Activated CD8-positive, alpha-beta T cell treated with anti-CD3 and anti-CD28 coated beads for 36 hours (primary cell): ENCODE measurements at regions of chr2 and their contacts with region 1.

Region 1: DNA sequence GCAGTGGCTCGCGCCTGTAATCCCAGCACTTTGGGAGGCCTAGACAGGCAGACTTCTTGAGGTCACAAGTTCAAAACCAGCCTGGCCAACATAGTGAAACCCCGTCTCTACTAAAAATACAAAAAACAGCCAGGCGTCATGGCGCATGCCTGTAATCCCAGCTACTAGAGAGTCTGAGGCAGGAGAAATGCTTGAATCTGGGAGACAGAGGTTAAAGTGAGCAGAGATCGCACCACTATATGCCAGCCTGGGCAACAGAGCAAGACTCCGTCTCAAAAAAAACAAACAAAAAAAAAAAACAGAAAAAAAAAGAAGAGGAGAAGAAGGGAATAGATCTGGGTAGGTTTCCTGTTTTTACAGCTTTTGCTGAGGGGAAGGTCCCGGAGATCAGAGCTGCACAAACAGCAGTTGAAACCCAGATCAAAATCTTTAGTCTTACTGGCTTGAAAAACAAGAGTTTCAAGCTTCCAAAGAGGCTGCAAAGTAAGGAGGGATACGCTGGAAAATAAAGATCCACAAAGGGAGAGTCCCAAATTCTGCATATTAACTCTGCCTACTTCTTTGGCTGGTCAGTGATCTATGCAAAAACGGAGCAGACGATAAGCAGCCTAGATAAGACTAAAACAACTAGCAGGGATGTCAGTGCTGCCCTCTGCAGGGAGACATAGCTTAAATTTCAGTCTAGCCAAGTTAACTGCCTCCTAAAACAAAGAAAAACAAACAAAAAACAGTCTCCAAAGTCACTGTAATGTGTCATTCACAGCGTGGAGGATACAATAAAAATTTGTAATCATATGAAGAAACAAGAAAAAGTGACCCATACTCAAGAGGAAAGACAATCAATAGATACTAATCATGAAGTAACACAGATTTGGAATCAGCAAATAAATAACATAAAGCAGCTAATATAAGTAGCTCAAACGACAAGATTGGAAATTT is 74.1 kb downstream of the TLK1 start:
- DNase-seq: peak; percentile 73
- ATAC-seq: peak; percentile 73
- H3K4me3 Mint-ChIP-seq: peak overlapping the region; percentile 61
- H3K27ac Mint-ChIP-seq: peak overlapping the region; percentile 79
- H3K4me1 Mint-ChIP-seq: peaks cover 64% of the 10 kb centered on the region
- H3K27me3 Mint-ChIP-seq: no peaks in the 10 kb centered on the region
- CTCF ChIP-seq: peak; percentile 68

Region 2: DNA sequence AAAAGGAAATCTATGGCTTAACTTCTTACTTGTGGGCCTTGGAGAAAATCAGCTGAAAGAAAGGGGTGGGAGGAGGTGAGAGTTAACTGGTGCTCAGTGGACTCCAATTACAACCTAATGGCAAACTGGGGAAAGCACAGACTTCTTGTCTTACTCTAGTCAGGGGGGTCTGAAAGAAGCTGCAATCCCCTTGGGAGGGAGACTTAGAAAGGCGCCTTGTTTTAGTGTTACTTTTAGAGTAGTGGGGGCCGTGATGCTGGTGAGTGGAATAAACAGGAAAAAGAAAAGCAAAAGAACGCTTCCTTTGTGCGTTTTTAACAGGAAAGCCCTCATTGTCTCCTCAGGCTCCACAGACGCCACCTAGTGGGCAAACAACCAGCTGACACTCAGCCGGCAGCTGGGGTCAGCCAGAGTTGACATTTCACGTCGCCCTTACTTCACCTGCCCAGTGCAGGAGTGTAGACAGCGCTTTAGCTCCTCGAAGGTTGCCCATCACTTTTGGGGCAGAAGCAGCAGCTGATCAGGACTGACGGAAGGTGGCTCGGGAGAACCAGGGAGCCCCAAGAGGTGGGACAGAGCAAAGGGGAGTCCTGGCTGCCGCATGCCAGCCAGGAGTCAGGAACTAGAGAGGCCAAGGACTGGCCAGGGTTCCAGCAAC is 213.5 kb before region 1 on chr2:
- CTCF ChIA-PET with region 1: no interaction called
- POLR2A ChIA-PET with region 1: no interaction called
- intact Hi-C with region 1: no loop called
- DNase-seq: peak; percentile 86
- ATAC-seq: peak; percentile 98
- H3K4me3 Mint-ChIP-seq: peak overlapping the region; percentile 49
- H3K27ac Mint-ChIP-seq: peak overlapping the region; percentile 60
- H3K4me1 Mint-ChIP-seq: peaks cover 10% of the 10 kb centered on the region
- H3K27me3 Mint-ChIP-seq: peaks cover 3% of the 10 kb centered on the region
- CTCF ChIP-seq: peak; percentile 95

Region 3: DNA sequence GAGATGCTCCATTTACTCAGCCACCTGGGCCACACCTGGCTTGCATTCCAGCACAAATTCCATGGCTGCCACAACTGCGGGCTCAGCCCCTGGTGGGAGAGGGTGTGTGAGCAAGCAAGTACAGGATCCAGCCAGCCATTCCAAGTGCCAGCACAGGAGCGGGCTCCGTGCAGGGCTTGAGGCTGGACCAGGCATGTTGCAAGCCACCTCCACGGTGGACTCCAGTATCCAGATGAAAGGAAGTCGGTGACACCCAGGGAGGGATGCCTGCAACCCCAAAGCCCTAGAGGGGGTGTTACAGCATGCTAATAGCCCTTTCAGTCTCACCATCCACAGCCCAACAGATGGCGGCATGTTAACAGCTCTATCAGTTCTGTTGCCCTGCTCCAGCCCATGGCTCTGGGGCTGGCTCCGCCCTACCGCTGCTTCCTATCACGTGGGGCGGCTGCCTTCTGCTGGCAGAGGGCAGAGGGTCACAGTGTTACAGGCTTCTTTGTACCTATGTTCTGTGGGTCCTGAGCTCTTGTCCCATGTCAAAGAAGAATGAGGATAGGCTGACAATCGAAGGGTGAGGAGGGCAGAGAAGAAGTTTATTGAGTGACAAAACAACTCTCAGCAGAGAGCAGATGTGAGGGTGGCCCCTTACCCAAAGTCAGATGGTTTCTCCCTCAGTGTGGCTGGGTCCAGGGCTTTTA is 169.3 kb before region 1 on chr2:
- CTCF ChIA-PET with region 1: no interaction called
- POLR2A ChIA-PET with region 1: no interaction called
- intact Hi-C with region 1: no loop called
- DNase-seq: no peak
- ATAC-seq: no peak
- H3K4me3 Mint-ChIP-seq: no peak overlapping the region
- H3K27ac Mint-ChIP-seq: no peak overlapping the region
- H3K4me1 Mint-ChIP-seq: no peaks in the 10 kb centered on the region
- H3K27me3 Mint-ChIP-seq: no peaks in the 10 kb centered on the region
- CTCF ChIP-seq: no peak

Region 4: GRCh38 chr2:170928824-170929685 is 157.6 kb before region 1 on chr2 and contains the start of gene GORASP2:
- CTCF ChIA-PET with region 1: interaction called, 11 read pairs
- POLR2A ChIA-PET with region 1: interaction called, 3 read pairs
- intact Hi-C with region 1: no loop called
- DNase-seq: peak; percentile 100
- ATAC-seq: peak; percentile 93
- H3K4me3 Mint-ChIP-seq: peak within 1 kb of the TSS; percentile 99
- H3K27ac Mint-ChIP-seq: peak within 1 kb of the TSS; percentile 99
- H3K4me1 Mint-ChIP-seq: peaks cover 45% of the 10 kb centered on the region
- H3K27me3 Mint-ChIP-seq: no peaks in the 10 kb centered on the region
- CTCF ChIP-seq: peak; percentile 96
- total RNA-seq, gene GORASP2: 68.4 to 70.6 TPM

Region 5: DNA sequence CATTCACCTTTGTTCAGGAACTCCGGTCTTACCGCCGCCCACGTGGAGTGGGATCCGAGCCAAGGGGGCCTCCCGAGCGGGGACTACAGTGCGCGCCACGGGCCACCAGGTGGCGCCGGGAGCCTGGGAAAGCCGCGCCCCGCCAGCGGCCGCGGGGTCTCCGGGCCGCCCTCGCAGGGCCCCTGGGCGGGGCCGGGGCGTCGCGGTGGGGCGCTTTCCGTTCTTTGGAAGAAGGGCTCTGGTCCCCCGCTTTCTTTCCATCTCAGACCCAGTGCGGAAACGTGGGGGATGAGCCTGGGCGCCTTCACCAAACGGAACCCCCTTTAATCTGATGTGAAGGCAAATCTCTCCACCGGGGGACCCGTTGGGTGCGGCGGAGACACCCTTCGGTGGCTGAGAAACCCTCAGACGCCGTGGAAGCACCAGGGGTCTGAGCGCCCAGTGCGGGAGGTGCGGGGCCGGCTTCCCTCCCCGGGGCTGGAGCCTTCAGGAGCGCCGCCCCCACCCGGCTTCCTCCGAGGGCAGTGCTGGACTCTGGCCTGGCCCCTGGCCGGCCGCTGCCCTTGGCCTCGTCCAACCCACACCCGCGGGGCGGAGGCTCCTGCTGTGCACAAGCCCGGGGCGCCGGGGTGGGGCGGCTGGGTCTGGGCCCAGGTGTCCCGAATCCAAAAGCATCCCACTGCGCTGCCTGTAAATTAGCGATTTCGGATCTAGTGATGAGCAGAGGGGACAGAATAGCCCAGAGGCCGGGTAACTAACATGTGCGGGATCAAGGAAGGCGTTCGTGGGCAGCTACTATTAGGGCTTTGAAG is 112.9 kb before region 1 on chr2:
- CTCF ChIA-PET with region 1: interaction called, 18 read pairs
- POLR2A ChIA-PET with region 1: no interaction called
- intact Hi-C with region 1: loop called (anchors 5 kb)
- DNase-seq: peak; percentile 90
- ATAC-seq: peak; percentile 96
- H3K4me3 Mint-ChIP-seq: peak overlapping the region; percentile 73
- H3K27ac Mint-ChIP-seq: peak overlapping the region; percentile 58
- H3K4me1 Mint-ChIP-seq: peaks cover 6% of the 10 kb centered on the region
- H3K27me3 Mint-ChIP-seq: no peaks in the 10 kb centered on the region
- CTCF ChIP-seq: peak; percentile 99

Region 6: DNA sequence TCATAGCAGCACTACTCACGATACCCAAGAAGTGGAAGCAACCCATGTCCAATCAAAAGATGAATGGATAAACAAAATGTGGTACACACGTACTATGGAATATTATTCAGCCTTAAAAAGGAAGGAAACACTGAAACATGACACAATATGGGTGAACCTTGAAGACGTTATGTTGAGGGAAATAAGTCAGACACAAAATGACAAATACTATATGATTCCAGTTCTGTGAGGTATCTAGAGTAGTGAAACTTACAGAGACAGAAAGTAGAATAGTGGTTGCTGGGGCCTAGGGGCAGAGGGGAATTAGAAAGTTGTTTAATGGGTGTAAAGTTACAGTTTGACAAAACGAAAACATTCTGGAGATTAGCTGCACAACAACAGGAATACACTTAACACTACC is 49.4 kb after region 1 on chr2:
- CTCF ChIA-PET with region 1: interaction called, 15 read pairs
- POLR2A ChIA-PET with region 1: no interaction called
- intact Hi-C with region 1: no loop called
- DNase-seq: peak; percentile 12
- ATAC-seq: peak; percentile 84
- H3K4me3 Mint-ChIP-seq: no peak overlapping the region
- H3K27ac Mint-ChIP-seq: peak overlapping the region; percentile 75
- H3K4me1 Mint-ChIP-seq: peaks cover 64% of the 10 kb centered on the region
- H3K27me3 Mint-ChIP-seq: no peaks in the 10 kb centered on the region
- CTCF ChIP-seq: no peak

Region 7: DNA sequence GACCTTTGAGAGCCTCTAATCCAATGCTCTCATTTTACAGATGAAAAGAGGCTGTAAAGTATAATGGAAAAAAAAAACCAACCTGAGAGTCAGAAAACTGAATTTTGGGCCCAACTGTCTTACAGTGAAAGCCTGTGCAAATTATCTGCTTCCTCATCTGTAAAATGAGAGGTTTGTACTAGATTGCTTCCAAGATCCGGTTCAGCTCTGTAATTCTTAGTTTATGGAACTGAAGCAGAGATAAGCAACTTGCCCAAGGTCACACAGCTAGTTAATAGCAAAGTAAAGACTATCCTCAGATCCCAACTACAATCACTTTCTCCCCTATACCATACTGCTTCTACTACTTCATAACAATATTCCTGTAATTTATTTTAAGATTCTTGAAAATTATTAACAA is 67.7 kb after region 1 on chr2:
- CTCF ChIA-PET with region 1: interaction called, 19 read pairs
- POLR2A ChIA-PET with region 1: no interaction called
- intact Hi-C with region 1: no loop called
- DNase-seq: no peak
- ATAC-seq: no peak
- H3K4me3 Mint-ChIP-seq: no peak overlapping the region
- H3K27ac Mint-ChIP-seq: no peak overlapping the region
- H3K4me1 Mint-ChIP-seq: peaks cover 60% of the 10 kb centered on the region
- H3K27me3 Mint-ChIP-seq: no peaks in the 10 kb centered on the region
- CTCF ChIP-seq: no peak

Region 8: DNA sequence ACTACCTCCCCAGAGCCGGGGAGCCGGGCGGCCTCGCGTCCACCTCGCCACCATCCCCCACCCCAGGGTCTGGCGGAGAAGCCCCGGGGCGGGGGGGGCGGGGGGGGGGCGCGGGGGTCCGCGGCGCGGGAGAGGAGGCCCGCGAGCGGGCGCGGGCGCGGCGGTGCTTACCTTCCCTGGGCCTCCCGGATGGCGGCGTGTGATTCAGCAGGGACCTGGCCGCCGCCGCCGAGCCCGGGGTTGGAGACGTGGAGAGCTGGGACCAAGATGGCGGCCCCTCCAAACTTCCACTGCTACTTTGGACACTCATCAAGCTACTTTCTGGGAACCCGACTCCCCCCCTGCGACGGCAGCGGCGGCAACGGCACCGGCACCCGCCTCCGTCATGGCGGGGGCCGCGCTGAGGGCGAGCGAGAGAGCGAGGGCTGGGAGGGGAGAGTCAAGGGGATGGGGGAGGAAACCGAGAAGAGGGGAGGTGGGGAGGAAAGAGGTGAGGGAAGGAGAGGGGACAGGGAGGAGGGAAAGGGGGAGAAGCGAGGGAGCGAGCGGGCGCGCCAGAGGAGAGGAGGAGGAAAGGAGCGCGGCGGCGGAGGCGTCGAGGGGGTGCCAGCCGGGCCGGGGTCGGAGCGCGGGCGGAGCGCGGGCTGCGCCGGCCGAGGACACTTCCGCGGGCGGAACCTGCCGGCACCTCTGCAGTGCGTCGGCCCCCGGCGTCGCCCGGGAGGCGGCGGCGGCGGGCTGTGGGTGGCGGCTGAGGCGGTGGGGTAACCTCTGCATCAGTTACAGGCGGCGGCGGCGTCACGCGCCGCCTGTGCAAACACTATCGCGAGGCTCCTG is 73.7 kb after region 1 on chr2 and contains the start of gene TLK1:
- CTCF ChIA-PET with region 1: interaction called, 19 read pairs
- POLR2A ChIA-PET with region 1: no interaction called
- intact Hi-C with region 1: no loop called
- DNase-seq: peak; percentile 82
- ATAC-seq: peak; percentile 69
- H3K4me3 Mint-ChIP-seq: peak within 1 kb of the TSS; percentile 91
- H3K27ac Mint-ChIP-seq: peak within 1 kb of the TSS; percentile 96
- H3K4me1 Mint-ChIP-seq: peaks cover 48% of the 10 kb centered on the region
- H3K27me3 Mint-ChIP-seq: no peaks in the 10 kb centered on the region
- CTCF ChIP-seq: no peak
- total RNA-seq, gene TLK1: 53.9 to 56.0 TPM

Region 9: DNA sequence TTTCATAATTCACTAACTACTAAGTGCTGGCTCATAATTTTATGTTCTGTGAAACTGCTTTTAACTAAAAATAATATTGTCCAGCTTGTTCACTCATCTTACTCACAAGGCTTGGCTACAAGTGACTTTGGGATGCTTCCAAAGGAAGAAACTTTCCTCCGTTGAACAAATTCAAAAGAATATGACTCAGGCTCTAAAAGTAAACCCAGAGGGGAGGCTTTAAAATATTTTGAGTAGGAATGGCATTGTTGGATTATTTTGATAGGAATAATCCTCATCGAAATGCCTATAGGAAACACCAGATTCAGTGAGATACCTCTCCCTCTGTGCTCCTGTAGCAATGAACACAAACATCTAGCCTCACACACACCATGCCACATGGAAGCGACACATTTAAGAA is 99.3 kb after region 1 on chr2:
- CTCF ChIA-PET with region 1: no interaction called
- POLR2A ChIA-PET with region 1: no interaction called
- intact Hi-C with region 1: no loop called
- DNase-seq: no peak
- ATAC-seq: no peak
- H3K4me3 Mint-ChIP-seq: no peak overlapping the region
- H3K27ac Mint-ChIP-seq: no peak overlapping the region
- H3K4me1 Mint-ChIP-seq: peaks cover 2% of the 10 kb centered on the region
- H3K27me3 Mint-ChIP-seq: peaks cover 2% of the 10 kb centered on the region
- CTCF ChIP-seq: no peak